ENCODE measurements at regions of chr20 and their contacts with region 1.

Region 1: DNA sequence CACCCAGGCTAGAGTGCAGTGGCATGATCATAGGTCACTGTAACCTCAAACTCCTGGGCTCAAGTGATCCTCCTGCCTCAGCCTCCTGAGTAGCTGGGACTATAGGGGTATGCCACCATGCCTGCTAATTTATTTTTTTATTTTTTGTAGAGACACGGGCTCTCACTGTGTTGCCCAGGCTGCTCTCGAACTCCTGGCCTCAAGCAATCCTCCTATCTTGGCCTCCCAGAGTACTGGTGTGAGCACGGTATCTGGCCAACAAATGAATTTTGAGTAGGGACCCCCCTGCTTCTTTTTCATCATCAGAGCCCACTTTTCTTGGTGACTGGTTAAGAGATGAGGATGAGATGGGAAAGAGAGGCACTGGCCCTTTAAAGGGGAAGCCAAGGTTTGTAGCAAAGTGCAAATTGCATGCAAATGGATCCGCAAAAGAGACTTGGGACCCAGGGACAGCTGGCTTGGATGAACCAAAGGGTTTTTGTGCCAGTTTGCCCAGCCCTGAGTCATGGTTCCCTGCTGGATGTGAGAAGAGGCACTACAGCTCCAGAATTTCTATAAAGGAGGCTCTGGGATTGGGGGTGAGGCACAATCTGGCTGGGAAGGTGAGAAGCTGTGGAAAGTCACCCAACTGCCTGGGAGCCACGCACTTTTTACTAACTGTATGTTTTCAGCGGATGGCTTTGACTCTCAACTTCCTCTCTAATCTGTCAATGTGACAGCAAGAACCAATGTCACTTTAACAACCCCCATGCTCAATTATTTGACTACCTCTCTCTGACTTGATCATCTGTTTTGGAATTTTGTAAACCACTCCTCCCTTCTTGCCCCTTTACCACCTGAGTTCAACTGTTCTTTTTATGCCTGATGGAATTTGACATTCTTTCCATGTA is 58.7 kb upstream of the RNF24 start:
- DNase-seq: no peak
- H3K4me3 Mint-ChIP-seq: no peak overlapping the region
- H3K27ac Mint-ChIP-seq: no peak overlapping the region
- H3K4me1 Mint-ChIP-seq: peaks cover 28% of the 10 kb centered on the region
- H3K27me3 Mint-ChIP-seq: peaks cover 16% of the 10 kb centered on the region

Region 2: GRCh38 chr20:3696200-3696599 is 377.9 kb before region 1 on chr20:
- CTCF ChIA-PET with region 1: no interaction called
- DNase-seq: no peak
- H3K4me3 Mint-ChIP-seq: no peak overlapping the region
- H3K27ac Mint-ChIP-seq: no peak overlapping the region
- H3K4me1 Mint-ChIP-seq: no peaks in the 10 kb centered on the region
- H3K27me3 Mint-ChIP-seq: peaks cover 11% of the 10 kb centered on the region

Region 3: DNA sequence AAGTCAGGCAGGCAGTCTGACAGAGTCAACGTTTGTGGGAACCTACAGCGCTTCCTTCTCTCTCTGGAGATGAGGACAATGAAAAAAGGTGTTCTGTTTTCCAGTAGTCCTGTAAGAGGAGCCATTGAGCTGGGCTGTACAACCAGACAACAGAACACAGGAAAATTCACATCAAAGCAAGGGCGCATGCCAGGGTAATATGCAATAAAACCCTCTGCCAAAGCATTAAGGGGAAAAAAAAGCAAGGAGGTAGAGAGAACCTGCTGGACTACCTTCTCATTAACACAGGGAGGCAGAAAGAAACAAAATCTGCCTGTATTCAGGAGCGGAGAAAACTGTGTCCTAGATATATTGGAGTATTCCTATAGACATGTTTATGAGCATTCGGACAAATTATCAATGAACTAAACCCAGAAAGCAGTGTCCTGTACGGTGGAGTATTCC is 60.0 kb before region 1 on chr20:
- CTCF ChIA-PET with region 1: interaction called, 12 read pairs
- DNase-seq: peak; percentile 59
- H3K4me3 Mint-ChIP-seq: peak overlapping the region; percentile 91
- H3K27ac Mint-ChIP-seq: no peak overlapping the region
- H3K4me1 Mint-ChIP-seq: peaks cover 44% of the 10 kb centered on the region
- H3K27me3 Mint-ChIP-seq: peaks cover 10% of the 10 kb centered on the region

Region 4: DNA sequence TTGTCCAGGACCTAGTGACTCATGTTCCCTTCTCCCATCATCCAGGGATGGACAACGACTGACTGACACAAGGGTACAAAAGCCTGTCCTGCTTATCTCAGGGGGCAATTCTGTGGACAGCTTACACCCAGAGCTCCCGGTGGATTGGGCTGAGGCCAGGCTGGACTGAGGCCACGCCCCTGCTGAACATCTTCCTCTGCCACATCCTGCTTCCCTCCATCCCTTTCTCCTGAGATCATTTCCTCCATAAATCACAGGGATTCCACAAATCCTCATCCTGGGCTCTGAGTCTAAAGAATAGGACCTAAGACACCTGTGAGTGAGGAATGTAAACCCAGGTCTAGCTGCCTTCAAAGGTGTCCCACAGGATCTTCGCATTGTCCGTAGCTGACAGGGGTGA is 28.4 kb before region 1 on chr20:
- CTCF ChIA-PET with region 1: no interaction called
- DNase-seq: no peak
- H3K4me3 Mint-ChIP-seq: no peak overlapping the region
- H3K27ac Mint-ChIP-seq: no peak overlapping the region
- H3K4me1 Mint-ChIP-seq: peaks cover 4% of the 10 kb centered on the region
- H3K27me3 Mint-ChIP-seq: peaks cover 52% of the 10 kb centered on the region